Right ventricle myocardium inferior (tissue), 1 donor: ENCODE measurements at regions of chr6 and their contacts with region 1.

Region 1: DNA sequence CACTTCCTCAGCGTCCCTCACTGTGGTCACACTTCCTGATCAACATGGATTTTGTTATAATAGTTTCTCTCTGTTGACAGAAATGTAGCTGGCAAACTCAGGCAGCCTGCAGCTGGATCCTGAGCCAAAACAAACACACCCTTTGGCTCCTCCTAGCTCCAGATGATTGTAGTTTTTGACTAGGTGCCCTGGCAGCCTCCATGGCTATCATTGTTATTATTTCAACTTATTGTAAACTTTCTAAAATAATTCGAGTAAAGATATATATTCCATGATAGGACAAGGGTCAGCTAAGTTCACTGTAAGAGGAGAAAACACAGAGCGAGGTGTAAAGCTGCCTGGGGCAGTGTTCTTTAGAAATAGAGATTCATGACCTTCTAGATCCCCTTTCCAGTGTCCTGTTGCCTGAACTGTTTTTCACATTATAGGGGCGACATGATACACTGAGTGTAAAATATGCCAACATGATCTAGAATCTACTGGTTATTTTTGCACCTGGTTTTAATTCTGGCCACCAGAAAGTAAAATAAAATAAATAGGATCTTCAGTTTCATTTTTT is 98.2 kb upstream of the HDGFL1 start:
- DNase-seq: no peak
- ATAC-seq: peak; percentile 82

Region 2: DNA sequence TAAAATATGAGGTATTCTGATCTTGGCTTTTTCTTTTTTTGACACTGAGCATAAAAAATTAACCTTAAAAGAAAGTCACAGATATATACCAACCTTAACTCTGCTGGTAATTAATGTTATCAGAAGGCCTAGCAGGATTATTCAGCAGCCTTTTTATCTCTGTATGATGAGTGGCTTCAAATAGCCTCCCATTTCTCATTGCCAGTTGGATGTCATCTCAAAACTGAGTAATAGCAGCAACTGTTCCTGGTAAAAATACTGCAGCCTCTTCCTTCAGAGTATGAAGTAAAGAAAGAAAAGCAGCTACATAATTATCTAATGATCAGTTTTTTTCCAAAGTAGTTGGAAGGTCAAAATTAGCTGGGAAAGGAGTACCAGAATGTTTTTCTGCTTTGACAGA is 73.3 kb after region 1 on chr6:
- intact Hi-C with region 1: loop called (anchors 10 kb)
- DNase-seq: no peak
- ATAC-seq: peak; percentile 73

Region 3: GRCh38 chr6:22613695-22614094 is 142.5 kb after region 1 on chr6:
- intact Hi-C with region 1: loop called (anchors 10 kb)
- DNase-seq: no peak
- ATAC-seq: no peak